ENCODE measurements at regions of chr7 and their contacts with region 1.

Region 1: GRCh38 chr7:77550586-77550985 is 13.5 kb downstream of the PTPN12 start:
- DNase-seq: no peak

Region 2: DNA sequence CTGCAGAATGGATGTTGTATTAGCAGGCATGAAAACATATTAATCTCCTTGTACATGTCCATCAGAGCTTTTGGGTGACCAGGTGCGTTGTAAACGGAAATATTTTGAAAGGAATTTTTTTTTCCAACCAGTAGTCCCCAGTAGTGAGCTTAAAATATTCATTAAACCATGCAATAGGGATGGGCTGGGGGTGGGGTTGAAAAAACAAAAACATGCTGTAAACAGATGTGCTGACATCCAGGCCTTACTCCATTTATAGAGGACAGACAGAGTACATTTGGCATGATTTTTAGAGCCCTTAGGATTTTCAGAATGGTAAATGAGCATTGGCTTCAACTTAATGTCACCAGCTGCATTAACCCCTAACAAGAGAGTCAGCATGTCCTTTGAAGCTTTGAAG is 36.7 kb after region 1 on chr7:
- intact Hi-C with region 1: no loop called
- DNase-seq: no peak

Region 3: DNA sequence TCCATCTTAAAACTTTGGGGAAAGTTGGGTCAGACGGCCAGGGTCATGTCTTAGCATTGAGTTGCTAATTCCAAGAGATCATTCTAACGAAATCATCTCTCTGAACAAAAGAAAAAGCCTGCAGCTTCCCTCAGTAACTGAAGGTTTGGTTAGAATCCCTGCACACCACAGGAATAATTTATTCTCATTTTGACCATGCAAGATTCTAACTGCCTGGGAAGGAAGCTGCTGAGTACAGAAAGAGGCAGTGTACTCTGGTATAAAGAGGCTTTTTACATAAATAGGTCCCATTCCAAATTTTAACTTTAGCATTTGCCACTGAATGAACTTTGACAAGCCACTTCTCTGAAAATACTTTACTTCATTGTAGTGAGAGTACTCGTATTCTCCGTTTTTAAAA is 68.7 kb after region 1 on chr7:
- intact Hi-C with region 1: loop called (anchors 10 kb)
- DNase-seq: no peak